ENCODE measurements at regions of chr7 and their contacts with region 1.

Region 1: DNA sequence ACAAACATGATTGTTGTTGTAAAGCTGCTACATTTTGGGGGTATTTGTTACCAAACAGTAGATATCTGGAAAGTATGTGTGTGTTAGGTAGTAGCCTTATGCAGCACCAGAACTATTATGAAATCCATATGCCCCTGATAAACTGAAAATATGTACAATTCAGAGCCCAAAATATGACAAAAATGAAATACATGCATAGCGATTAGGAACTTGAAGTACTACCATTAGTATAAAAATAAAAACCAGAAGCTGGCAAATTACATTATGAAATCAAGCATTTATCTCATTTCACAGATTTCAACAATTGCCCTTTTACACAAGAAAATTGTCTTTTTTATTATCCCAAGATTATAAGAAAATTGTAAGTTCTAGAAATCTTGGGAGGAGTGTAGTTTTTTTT is 33.9 kb downstream of the SLC26A5 start:
- DNase-seq: no peak
- ATAC-seq: no peak
- H3K4me3 Mint-ChIP-seq: no peak overlapping the region
- H3K27ac Mint-ChIP-seq: no peak overlapping the region
- H3K4me1 Mint-ChIP-seq: no peaks in the 10 kb centered on the region
- H3K27me3 Mint-ChIP-seq: peaks cover 2% of the 10 kb centered on the region

Region 2: GRCh38 chr7:103296901-103297836 is 115.0 kb before region 1 on chr7 and contains the start of gene PMPCB:
- CTCF ChIA-PET with region 1: interaction called, 3 read pairs
- POLR2A ChIA-PET with region 1: no interaction called
- intact Hi-C with region 1: loop called (anchors 1 kb)
- DNase-seq: peak; percentile 98
- ATAC-seq: peak; percentile 98
- H3K4me3 Mint-ChIP-seq: peak within 1 kb of the TSS; percentile 89
- H3K27ac Mint-ChIP-seq: peak within 1 kb of the TSS; percentile 93
- H3K4me1 Mint-ChIP-seq: peaks cover 33% of the 10 kb centered on the region
- H3K27me3 Mint-ChIP-seq: no peaks in the 10 kb centered on the region
- total RNA-seq, gene PMPCB: 70.7 to 86.9 TPM

Measured in activated CD4-positive, alpha-beta T cell treated with anti-CD3 and anti-CD28 coated beads for 36 hours (primary cell).